ENCODE measurements at regions of chr12 and their contacts with region 1.

Region 1: GRCh38 chr12:114166362-114166761 is 200.2 kb upstream of the RBM19 start:
- DNase-seq: peak; percentile 36 to 67 (median 47)
- H3K4me3 ChIP-seq: no peak overlapping the region
- H3K27ac ChIP-seq: no peak overlapping the region
- H3K4me1 ChIP-seq: no peaks in the 10 kb centered on the region
- H3K27me3 ChIP-seq: peaks cover 11% of the 10 kb centered on the region
- CTCF ChIP-seq: peak; percentile 40 to 74 (median 68)
- POLR2A ChIP-seq: no peak

Region 2: GRCh38 chr12:114096461-114096860 is 69.9 kb before region 1 on chr12:
- intact Hi-C with region 1: no loop called
- DNase-seq: no peak
- H3K4me3 ChIP-seq: no peak overlapping the region
- H3K27ac ChIP-seq: no peak overlapping the region
- H3K4me1 ChIP-seq: no peaks in the 10 kb centered on the region
- H3K27me3 ChIP-seq: no peaks in the 10 kb centered on the region
- CTCF ChIP-seq: no peak
- POLR2A ChIP-seq: no peak

Region 3: DNA sequence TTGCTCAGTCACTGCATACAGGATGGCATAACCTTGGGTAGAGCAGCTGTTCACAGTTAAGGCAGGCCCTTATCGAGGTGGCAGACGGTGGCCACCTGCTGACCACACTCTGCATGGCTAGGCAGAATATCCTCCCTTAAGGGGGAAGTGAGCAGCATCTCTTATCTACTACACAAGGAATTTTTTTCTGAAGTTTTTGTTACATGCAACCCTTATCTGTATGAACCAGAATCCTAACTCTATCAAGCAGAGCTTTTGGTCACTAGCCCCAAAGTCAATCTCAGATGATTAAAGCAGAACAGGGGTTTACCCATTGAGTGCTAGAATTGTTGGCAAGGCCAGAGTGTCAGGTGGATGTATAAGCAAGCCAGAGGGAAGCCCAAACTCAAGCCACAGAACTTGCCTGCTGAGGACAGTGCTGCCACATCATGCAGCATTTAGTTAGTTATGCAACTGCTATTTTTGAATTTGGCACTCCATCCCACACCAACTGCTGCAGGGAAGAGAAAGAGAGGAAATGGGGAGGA is 46.8 kb after region 1 on chr12:
- intact Hi-C with region 1: no loop called
- DNase-seq: no peak
- H3K4me3 ChIP-seq: no peak overlapping the region
- H3K27ac ChIP-seq: no peak overlapping the region
- H3K4me1 ChIP-seq: no peaks in the 10 kb centered on the region
- H3K27me3 ChIP-seq: peaks cover 12% of the 10 kb centered on the region
- CTCF ChIP-seq: no peak
- POLR2A ChIP-seq: no peak

Region 4: GRCh38 chr12:114319422-114319821 is 153.1 kb after region 1 on chr12:
- intact Hi-C with region 1: no loop called
- DNase-seq: peak in 3 of 7 donors; percentile 1 to 19 (median 18)
- H3K4me3 ChIP-seq: no peak overlapping the region
- H3K27ac ChIP-seq: no peak overlapping the region
- H3K4me1 ChIP-seq: no peaks in the 10 kb centered on the region
- H3K27me3 ChIP-seq: peaks cover 6% of the 10 kb centered on the region
- CTCF ChIP-seq: no peak
- POLR2A ChIP-seq: no peak

Region 5: DNA sequence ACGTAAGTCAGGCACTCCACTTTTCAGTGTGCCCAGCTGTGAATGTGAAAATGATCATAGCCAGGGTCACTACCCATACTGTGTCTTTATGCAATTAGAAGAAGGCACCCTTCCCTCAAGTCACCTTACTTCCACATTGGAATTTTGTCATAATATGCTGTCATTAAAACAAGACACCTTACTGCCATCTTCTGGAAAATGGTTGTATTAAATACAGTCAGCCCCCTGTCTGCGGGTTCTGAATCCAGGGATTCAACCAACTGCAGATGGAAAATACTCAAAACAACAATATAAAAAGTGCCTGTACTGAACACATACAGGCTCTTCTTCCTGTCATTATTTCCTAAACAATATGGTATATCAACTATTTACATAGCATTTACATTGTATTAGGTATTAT is 309.8 kb after region 1 on chr12:
- intact Hi-C with region 1: loop called in 1 of 2 experiments (anchors 10 kb)
- DNase-seq: peak in 1 of 7 donors; percentile 3
- H3K4me3 ChIP-seq: no peak overlapping the region
- H3K27ac ChIP-seq: no peak overlapping the region
- H3K4me1 ChIP-seq: peaks cover 0 to 12% of the 10 kb centered on the region in 2 donors
- H3K27me3 ChIP-seq: peaks cover 61% of the 10 kb centered on the region
- CTCF ChIP-seq: peak; percentile 34 to 58 (median 48)
- POLR2A ChIP-seq: no peak

Region 6: DNA sequence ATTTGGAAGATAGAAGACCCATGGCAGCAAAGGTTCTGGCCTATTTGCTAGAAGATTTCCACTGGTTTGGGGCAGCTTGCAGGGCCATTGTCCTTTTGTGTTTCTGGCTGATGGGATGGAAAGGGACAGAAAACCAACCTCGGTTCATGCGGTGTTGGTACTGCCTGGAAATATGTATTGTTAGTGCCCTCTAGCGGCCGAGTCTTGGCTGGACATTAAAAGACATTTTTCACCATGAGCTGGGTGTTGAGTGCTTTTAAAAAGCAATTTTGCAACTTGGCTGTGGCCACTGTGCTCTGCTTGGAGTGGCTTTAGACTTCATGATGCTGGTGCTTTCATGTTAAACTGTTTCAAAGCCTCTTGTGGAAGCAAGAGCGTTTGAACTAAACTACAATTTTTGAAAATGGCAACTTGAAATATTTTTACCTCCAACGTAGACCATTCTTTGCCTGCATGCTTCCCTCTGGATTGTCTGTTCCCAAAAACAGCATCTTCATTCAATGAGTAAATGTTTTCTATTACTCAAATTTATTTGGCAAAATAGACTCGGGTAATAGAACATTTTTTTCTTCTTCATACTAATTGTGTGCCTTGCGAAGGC is 342.3 kb after region 1 on chr12:
- intact Hi-C with region 1: loop called in 1 of 2 experiments (anchors 5 kb)
- DNase-seq: peak; percentile 58 to 91 (median 75)
- H3K4me3 ChIP-seq: no peak overlapping the region
- H3K27ac ChIP-seq: no peak overlapping the region
- H3K4me1 ChIP-seq: no peaks in the 10 kb centered on the region
- H3K27me3 ChIP-seq: peaks cover 6% of the 10 kb centered on the region
- CTCF ChIP-seq: peak; percentile 63 to 82 (median 72)
- POLR2A ChIP-seq: no peak

Measured in adrenal gland (tissue), 19 donors.